Activated B cell treated with CpG ODN at 0.5 μM for 24 hours (primary cell): ENCODE measurements at regions of chr11 and their contacts with region 1.

Region 1: DNA sequence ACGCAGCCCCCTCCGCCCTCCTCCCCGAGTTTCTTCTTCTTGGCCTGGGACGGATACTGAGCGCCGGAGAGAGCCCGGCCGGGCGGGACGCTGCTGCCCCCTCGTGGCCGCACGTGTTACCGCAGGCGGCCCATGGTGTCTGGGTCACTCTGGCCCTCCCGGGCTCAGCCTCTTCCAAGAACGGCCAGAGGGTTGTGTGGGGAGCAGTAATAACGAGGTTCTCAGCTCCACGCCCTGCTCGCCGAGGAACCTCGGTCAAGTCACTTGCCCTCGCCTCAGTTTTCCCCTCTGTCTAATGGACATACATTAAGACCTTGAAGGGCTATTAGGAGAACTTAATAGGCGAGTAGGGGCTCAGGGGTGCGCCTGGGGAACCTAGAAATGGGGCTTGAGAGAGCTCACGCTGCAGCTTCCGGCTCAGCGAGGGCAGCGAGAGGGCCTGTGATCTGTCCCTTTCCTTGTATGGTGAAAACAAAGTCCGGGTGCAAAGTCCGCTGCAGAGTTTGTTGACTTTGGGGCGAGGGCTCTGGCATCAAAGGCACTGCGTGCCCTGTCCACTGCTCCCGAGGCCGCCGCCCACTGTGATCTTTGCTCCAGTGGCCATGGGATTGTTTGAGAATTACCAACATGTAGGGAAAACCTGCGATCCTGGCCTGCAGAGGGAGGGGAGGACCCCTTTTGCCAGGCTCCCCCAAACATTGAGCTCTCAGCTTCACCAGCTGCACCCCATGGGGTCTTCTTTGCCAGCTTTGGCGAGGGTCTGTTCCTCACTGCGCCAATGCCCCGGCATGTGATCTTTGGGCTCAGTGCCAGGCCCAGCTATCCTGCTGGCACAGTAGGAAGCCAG is 14.4 kb upstream of the LRP5 start:
- DNase-seq: peak; percentile 81
- ATAC-seq: peak; percentile 94
- H3K4me3 Mint-ChIP-seq: peak overlapping the region; percentile 50
- H3K27ac Mint-ChIP-seq: peak overlapping the region; percentile 53
- H3K4me1 Mint-ChIP-seq: peaks cover 40% of the 10 kb centered on the region
- H3K27me3 Mint-ChIP-seq: no peaks in the 10 kb centered on the region
- CTCF ChIP-seq: peak; percentile 83

Region 2: GRCh38 chr11:68010090-68011041 is 287.7 kb before region 1 on chr11 and contains the start of gene ALDH3B1:
- CTCF ChIA-PET with region 1: no interaction called
- POLR2A ChIA-PET with region 1: no interaction called
- intact Hi-C with region 1: loop called (anchors 5 kb)
- DNase-seq: peak; percentile 54
- ATAC-seq: peak; percentile 83
- H3K4me3 Mint-ChIP-seq: peak within 1 kb of the TSS; percentile 78
- H3K27ac Mint-ChIP-seq: peak within 1 kb of the TSS; percentile 79
- H3K4me1 Mint-ChIP-seq: peaks cover 51% of the 10 kb centered on the region
- H3K27me3 Mint-ChIP-seq: no peaks in the 10 kb centered on the region
- CTCF ChIP-seq: no peak
- total RNA-seq, gene ALDH3B1: 0.53 and 0.98 TPM in 2 replicates

Region 3: DNA sequence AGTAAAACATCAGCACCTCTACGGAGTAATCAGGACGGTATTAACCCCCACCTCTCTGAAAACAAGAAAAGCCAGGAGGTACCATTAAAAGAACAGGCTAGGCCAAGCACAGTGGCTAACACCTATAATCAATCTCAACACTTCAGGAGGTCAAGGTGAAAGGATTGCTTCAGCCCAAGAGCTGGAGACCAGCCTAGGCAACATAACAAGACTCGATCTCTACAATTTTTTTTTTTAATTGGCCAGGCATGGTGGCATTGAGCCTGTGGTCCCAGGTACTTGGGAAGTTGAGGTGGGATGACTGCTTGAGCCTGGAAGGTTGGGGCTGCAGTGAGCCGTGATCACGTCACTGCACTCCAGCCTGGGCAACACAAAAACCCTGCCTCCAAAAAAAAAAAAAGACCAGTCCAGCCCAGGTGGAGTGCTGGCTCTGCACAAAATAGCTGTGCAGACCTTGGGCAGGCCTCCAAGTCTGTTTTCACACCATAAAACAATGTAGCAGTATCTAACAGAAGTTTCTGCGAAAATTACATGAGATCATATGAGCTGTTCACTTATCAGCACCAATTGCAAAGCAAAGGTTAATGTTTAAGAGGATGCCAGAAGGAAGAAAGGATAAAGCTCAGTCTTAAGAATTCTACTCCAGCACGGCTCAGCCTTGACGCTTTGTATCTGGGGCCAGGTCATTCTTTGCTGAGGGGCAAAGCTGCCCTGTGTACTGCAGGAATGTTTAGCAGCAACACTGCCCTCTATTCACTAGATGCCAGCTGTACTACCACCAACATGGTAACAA is 191.7 kb before region 1 on chr11:
- CTCF ChIA-PET with region 1: no interaction called
- POLR2A ChIA-PET with region 1: no interaction called
- intact Hi-C with region 1: no loop called
- DNase-seq: no peak
- ATAC-seq: no peak
- H3K4me3 Mint-ChIP-seq: no peak overlapping the region
- H3K27ac Mint-ChIP-seq: no peak overlapping the region
- H3K4me1 Mint-ChIP-seq: peaks cover 4% of the 10 kb centered on the region
- H3K27me3 Mint-ChIP-seq: no peaks in the 10 kb centered on the region
- CTCF ChIP-seq: no peak

Region 4: DNA sequence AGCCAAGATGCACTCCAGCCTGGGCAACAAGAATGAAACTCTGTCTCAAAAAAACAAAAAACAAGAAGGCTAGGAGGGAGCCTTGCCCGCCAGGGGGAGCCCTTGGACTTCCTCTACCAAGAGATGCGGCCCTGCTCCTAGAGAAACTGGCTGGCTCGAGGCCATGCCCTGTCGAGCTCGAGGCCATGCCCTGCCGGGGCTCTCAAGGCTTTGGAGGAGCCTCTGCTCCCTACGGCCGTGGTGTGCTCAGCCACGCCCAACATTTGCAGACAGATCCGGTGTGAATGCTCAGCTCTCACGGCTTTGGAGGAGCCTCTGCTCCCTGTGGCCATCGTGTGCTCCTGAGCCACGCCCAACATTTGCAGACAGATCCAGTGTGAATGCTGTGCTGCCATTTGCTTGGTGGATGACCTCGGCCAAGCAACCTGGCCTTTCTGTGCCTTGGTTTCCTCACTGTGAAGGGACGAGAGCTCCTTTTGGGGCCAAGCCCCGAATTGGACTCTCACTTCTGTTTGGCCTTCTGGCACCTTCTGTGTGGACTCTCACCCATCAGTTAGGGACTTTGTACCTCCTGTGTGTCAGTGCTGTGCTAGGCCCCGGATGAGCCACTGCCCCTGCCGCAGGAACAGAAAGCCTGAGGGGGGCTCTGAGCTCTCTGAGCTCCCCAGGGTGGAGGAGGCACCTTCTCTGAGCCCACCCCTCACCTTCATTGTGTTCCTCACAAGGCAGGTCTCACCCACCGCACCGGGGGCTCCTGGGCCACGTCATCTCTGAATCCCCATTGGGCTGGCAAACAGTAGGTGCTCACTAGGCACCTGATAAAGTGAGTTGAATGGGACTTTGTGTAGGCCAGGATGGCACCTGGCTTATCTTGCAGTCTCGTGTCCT is 40.3 kb before region 1 on chr11:
- CTCF ChIA-PET with region 1: interaction called, 249 read pairs
- POLR2A ChIA-PET with region 1: interaction called, 62 read pairs
- intact Hi-C with region 1: loop called (anchors 1 kb)
- DNase-seq: peak; percentile 90
- ATAC-seq: peak; percentile 94
- H3K4me3 Mint-ChIP-seq: peak overlapping the region; percentile 52
- H3K27ac Mint-ChIP-seq: peak overlapping the region; percentile 80
- H3K4me1 Mint-ChIP-seq: peaks cover 20% of the 10 kb centered on the region
- H3K27me3 Mint-ChIP-seq: no peaks in the 10 kb centered on the region
- CTCF ChIP-seq: no peak

Region 5: DNA sequence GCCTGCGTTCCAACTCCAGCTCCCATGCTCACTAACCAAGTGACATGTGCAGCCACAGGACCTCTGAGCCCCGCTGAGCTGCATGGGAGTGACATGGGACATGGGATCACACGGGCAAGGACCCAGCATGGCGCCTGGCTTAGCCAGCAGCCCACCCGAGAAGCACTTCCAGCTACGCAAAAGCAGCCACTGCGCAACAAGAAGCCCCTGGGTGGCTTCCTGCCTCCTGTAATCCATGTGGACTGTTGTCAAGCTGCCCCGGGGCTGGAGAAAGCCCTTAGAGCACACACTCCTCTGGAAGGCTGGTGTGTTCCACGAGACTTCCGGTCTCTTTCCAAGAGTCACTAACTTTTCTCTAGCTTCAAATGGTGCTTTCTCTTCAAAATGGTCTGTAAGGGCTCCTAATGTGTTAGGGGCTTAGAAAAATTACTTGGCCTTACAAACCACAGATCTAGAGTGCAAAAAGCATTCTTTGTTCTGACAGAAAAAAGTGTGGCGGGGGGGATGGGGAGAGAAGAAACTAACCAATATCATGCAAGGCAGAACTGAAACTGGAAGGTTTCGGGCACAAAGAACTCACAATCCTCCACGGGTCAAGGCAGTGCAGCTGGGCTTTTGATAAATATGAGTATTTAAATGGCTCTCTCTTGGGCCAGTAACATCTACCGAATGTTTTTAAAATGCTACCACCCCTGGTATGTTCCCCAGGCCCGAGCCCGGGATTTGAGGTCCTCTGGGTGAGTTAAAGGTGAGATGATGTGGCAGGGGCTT is 31.7 kb before region 1 on chr11:
- CTCF ChIA-PET with region 1: interaction called, 249 read pairs
- POLR2A ChIA-PET with region 1: interaction called, 93 read pairs
- intact Hi-C with region 1: loop called (anchors 1 kb)
- DNase-seq: no peak
- ATAC-seq: peak; percentile 75
- H3K4me3 Mint-ChIP-seq: peak overlapping the region; percentile 67
- H3K27ac Mint-ChIP-seq: peak overlapping the region; percentile 98
- H3K4me1 Mint-ChIP-seq: peaks cover 74% of the 10 kb centered on the region
- H3K27me3 Mint-ChIP-seq: no peaks in the 10 kb centered on the region
- CTCF ChIP-seq: no peak

Region 6: GRCh38 chr11:68271781-68272608 is 26.0 kb before region 1 on chr11 and contains the start of gene C11orf24:
- CTCF ChIA-PET with region 1: interaction called, 71 read pairs
- POLR2A ChIA-PET with region 1: interaction called, 93 read pairs
- intact Hi-C with region 1: loop called (anchors 1 kb)
- DNase-seq: peak; percentile 95
- ATAC-seq: peak; percentile 78
- H3K4me3 Mint-ChIP-seq: peak within 1 kb of the TSS; percentile 95
- H3K27ac Mint-ChIP-seq: peak within 1 kb of the TSS; percentile 98
- H3K4me1 Mint-ChIP-seq: peaks cover 79% of the 10 kb centered on the region
- H3K27me3 Mint-ChIP-seq: no peaks in the 10 kb centered on the region
- CTCF ChIP-seq: no peak
- total RNA-seq, gene C11orf24: 75.5 and 78.0 TPM in 2 replicates

Region 7: DNA sequence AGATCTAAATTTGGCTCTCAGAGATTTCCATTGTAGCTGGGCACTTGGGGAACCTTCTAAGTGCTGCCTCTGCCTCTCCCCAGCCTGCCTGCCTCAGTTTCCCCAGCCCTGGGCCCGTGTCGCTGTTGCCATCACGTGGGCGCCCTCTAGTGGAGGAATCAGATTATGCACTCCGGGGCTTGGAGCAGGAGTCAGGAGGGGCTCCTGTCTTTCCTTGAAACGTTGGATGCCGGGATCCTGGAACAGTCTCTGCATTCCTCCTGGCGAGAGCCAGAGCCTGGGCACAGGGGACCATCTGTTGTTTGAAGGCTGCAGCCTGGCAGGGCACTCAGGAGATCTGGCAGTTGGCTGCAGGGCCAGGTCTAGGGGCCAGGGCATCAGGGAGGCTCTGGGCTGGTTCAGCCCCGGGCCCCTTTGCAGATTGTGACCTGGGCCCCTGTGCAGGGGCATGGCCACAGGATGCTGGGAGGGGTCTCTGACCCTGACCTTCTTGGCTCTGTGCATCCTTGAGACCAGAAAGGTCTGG is 86.0 kb after region 1 on chr11:
- CTCF ChIA-PET with region 1: interaction called, 10 read pairs
- POLR2A ChIA-PET with region 1: no interaction called
- intact Hi-C with region 1: loop called (anchors 1 kb)
- DNase-seq: peak; percentile 64
- ATAC-seq: peak; percentile 45
- H3K4me3 Mint-ChIP-seq: no peak overlapping the region
- H3K27ac Mint-ChIP-seq: no peak overlapping the region
- H3K4me1 Mint-ChIP-seq: peaks cover 45% of the 10 kb centered on the region
- H3K27me3 Mint-ChIP-seq: no peaks in the 10 kb centered on the region
- CTCF ChIP-seq: peak; percentile 50

Region 8: DNA sequence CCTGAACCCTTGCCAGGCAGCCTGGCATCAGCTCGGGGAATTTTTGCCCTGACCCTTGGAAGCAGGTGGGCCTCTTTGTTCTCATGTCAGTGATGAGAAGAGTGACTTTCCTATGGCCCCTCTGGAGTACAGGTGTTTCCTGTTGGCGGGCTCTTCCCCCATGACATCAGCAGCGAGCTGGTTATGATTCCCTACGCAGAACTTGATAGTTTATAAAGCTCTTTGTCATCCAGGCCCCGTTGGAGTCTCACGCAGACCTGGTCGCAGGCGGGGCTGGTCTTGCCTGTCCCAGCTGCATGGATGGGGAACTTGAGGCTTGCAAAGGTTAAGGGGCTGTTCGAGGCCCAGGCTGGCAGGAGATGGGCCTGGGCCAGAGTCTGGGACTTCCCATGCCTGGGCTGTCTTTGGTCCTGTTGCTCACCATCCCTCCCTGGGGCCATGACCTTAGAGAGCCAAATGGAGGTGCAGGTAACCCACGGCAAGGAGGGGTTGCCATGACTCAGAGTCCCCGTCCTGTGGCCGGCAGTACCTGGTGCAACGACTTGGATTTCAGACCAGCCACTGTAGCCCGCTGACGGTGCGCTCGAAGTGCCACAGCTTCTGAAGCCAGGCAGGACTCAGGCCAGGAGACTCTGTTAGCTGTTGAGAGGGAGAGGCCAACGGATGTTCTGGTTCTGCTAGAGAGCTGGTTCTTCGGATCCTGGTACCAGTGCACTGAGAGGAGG is 116.6 kb after region 1 on chr11:
- CTCF ChIA-PET with region 1: no interaction called
- POLR2A ChIA-PET with region 1: no interaction called
- intact Hi-C with region 1: no loop called
- DNase-seq: no peak
- ATAC-seq: no peak
- H3K4me3 Mint-ChIP-seq: no peak overlapping the region
- H3K27ac Mint-ChIP-seq: no peak overlapping the region
- H3K4me1 Mint-ChIP-seq: peaks cover 15% of the 10 kb centered on the region
- H3K27me3 Mint-ChIP-seq: no peaks in the 10 kb centered on the region
- CTCF ChIP-seq: no peak

Region 9: DNA sequence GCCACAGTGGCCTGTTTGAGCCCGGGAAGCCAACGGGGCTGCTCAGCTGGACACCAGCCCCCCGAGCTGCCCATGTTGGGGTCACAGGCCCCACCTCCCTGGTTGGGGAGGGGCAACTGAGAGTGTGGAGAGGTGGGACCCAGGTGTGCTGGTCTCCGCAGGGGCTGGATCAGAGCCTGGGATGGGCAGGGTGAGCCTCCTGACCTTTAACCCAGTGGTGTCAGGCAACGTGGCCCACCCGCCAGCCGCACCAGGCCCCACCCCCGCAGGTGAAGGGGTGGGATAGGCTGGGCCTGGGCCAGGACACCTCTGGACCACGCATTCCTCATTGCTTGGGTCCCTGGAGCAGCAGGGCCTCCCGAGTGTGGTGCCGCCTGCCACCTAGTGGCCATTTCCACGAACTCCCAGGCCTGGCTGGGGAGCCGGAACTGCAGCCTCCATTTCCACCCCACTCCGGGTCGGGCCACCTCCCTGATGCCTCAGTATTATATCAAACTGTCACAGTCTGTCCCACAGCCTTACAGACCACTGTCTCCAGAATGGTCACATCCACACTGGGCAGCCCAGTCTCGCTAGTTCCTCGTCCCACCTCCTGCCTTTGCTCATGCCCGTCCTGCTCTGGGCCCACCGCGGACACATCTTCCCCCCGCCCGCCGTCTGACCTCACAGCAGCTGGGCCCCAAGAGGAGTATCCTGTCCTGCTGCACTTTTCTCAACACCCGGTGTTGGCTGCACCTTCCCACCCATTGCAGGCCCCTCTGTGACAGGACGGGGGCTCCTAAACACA is 149.2 kb after region 1 on chr11:
- CTCF ChIA-PET with region 1: interaction called, 3 read pairs
- POLR2A ChIA-PET with region 1: no interaction called
- intact Hi-C with region 1: loop called (anchors 1 kb)
- DNase-seq: peak; percentile 74
- ATAC-seq: peak; percentile 99
- H3K4me3 Mint-ChIP-seq: no peak overlapping the region
- H3K27ac Mint-ChIP-seq: no peak overlapping the region
- H3K4me1 Mint-ChIP-seq: peaks cover 13% of the 10 kb centered on the region
- H3K27me3 Mint-ChIP-seq: no peaks in the 10 kb centered on the region
- CTCF ChIP-seq: peak; percentile 97